ENCODE measurements at regions of chr14 and their contacts with region 1.

Region 1: DNA sequence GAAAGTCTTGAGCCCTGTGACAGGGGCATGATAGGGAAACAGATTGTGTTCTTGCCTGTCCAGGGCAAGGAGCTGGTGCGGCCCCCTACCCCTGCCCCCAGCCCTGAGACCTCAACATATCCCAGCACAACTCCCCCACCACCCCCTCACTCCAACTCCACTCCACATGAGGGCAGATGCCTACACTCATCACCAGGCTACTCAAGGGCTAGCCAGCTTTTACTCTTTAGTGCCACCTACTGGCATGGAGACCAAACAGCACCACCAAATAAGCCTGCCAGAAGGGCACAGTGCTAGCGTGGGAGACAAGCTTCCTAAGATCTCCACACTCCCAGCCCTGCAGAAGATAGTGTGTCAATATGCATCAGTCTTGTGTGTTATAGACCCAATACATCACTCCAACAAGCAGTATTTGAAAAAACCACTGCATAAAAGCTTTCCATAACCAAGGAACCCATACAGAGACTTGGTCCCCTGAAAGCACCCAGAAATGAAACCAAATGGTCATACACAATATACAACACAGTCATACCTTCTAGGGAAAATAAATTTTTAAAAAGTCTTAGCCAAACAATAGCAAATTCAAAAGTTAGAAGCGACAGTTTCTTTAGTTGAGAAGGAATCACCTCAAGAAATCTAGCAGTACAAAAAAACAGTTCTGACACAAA is 154.4 kb downstream of the KCNK10 start:
- DNase-seq: peak; percentile 44
- ATAC-seq: peak; percentile 84

Region 2: GRCh38 chr14:87944987-87945604 is 223.5 kb before region 1 on chr14:
- intact Hi-C with region 1: loop called (anchors 5 kb)
- DNase-seq: no peak
- ATAC-seq: peak; percentile 43

Region 3: GRCh38 chr14:88013750-88014349 is 154.8 kb before region 1 on chr14:
- intact Hi-C with region 1: loop called (anchors 10 kb)
- DNase-seq: peak; percentile 65
- ATAC-seq: peak; percentile 96